ENCODE measurements at regions of chr2 and their contacts with region 1.

Region 1: DNA sequence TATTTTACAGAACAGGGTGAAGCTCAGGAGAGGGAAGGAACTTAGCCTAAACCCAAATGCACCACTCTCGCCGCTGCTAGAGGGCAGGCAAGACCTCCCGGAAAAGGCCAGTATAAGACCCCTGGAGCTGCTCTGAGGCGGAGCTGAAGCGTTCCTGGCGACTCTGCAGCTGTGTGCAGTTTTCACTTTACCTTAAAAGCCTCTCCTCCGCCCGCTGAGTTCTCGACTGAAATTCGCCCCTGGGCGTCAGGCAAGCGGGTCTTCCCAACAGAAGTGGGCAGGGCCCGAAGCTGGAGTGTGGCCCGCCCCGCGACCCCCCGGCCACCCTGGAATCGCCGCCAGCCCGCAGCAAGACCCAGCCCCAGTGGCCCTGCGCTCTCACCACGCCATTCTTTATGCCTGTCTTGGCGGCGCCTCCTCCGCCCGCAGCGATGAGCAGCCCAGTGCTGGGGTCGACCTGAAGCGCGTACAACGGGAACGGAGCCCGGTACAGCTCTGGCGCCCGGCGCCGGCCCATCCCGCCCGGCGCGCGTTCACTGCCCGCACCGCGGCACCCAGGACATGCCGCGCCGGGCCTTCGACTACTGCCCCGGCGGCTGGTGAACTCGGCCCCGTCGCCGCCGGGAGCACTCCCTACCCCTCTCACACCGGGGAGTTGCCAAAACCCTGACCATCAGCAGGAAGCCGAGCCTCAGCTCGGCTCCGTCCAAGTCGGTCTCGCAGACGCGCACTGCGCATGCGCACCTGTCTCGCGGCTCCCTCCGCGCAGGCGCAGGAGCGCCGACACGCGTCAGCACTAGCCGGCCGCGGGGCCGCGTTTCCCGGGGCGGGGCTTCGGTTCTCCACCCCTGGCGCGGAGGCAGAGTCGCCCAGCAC is at the start of gene PREB:
- DNase-seq: peak; percentile 93 to 96
- ATAC-seq: peak; percentile 89 to 96
- H3K4me3 ChIP-seq: peak within 1 kb of the TSS; percentile 89
- H3K27ac ChIP-seq: peak within 1 kb of the TSS; percentile 91 to 95
- H3K4me1 ChIP-seq: peaks cover 11% of the 10 kb centered on the region
- CTCF ChIP-seq: no peak
- EP300 ChIP-seq: no peak
- POLR2A ChIP-seq: peak; percentile 93
- RAD21 ChIP-seq: no peak; a peak in 1 of 5 replicates
- polyA plus RNA-seq, gene PREB: 79.9 and 139 TPM in 2 replicates

Region 2: DNA sequence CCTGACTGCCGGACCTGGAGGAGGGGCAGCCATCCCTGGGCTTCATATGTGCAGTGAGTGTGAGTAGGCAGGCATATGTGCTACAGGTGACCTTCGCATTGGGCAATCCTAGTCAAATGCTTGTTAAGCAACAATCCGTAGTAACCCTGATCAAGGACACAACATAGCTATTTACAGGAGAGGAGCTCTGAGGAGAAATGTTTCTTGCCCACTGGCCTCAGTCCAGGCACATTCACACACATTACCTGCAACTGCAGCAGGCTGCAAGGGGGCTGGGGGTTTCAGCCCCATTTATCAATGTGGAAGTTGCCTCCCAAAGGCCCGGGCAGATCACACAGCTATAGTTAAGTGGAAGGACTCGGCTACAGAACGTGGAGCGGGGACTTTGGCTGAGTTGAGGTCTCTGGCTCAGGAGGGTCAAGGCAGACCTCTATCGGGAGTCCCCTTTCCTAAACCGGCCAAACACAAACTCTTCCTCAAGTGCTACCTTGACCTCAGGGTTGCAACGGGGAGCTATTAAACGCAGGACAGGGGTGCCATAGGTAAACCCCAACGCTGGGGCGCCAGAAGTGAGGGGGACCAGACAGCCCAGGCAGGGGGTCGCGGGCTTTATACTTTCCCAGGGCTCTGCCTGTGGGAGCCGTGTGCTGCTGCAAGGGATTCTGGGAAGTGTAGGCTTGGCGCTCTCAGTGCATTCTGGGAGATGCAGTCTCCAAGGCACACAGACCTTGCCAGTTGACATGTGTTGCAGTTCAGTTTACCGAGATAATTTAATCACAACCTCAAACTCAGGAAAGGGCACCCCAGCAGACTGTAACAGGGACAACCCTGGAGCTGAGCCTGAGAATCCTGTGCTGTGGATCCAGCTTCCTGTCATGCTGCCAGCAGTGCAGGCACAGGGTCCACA is 38.1 kb before region 1 on chr2:
- CTCF ChIA-PET with region 1: interaction called, 14 read pairs
- POLR2A ChIA-PET with region 1: no interaction called
- DNase-seq: peak; percentile 56 to 80
- ATAC-seq: peak; percentile 67 to 85
- H3K4me3 ChIP-seq: no peak overlapping the region
- H3K27ac ChIP-seq: peak overlapping the region; percentile 46 to 71; a peak in 5 of 6 replicates
- H3K4me1 ChIP-seq: peaks cover 20% of the 10 kb centered on the region
- CTCF ChIP-seq: no peak
- EP300 ChIP-seq: no peak
- POLR2A ChIP-seq: no peak
- RAD21 ChIP-seq: no peak

Region 3: DNA sequence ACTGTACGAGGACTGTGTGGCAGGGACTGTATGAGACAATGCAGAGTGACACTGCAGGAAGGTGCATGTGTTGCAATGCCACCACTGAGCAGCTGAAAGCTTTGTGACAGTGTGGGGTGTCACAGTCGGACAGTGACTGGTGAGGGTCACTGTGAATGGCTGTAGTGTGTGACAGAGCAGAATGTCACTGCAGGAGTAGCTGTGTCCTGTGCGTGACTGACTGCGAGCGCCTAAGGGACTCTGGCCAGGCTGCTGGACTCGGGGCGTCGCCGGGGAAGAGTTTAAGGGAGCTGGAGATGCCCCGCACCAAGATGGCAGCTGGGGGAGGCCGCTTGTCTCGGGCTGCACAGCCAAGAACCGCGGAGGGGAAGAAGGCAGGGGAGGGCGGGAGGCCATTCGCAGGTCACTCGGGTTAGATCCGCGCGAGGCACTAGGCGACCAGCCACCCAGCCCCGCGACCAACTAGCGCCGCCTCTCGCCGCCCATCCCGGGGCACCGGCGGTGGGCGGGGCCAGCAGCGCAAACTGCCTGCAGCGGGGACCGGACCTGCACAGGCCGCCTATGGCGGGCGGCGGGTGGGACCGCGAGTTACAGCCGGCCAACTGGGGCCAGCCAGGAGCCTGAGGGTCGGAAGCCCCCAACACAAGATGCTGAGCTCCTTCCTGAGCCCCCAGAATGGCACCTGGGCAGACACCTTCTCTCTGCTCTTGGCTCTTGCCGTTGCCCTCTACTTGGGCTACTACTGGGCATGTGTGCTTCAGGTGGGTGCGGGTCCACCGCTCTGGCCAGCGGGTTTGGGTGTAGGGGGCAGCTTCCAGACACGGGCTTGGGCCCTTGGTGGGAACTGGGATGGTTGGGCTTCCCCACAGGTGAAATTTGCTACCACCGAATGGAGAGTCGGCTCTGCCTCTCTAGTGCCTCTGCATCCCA is 10.6 kb before region 1 on chr2 and contains the start of gene ABHD1:
- CTCF ChIA-PET with region 1: interaction called, 25 read pairs
- POLR2A ChIA-PET with region 1: interaction called, 17 read pairs
- DNase-seq: peak; percentile 36 to 69
- ATAC-seq: peak; percentile 79 to 91
- H3K4me3 ChIP-seq: peak within 1 kb of the TSS; percentile 56
- H3K27ac ChIP-seq: peak within 1 kb of the TSS; percentile 73 to 87
- H3K4me1 ChIP-seq: peaks cover 3% of the 10 kb centered on the region; the same call in 1 of the 3 replicates
- CTCF ChIP-seq: no peak
- EP300 ChIP-seq: no peak
- POLR2A ChIP-seq: peak; percentile 89
- RAD21 ChIP-seq: no peak
- polyA plus RNA-seq, gene ABHD1: 1.9 and 2.4 TPM in 2 replicates

Region 4: DNA sequence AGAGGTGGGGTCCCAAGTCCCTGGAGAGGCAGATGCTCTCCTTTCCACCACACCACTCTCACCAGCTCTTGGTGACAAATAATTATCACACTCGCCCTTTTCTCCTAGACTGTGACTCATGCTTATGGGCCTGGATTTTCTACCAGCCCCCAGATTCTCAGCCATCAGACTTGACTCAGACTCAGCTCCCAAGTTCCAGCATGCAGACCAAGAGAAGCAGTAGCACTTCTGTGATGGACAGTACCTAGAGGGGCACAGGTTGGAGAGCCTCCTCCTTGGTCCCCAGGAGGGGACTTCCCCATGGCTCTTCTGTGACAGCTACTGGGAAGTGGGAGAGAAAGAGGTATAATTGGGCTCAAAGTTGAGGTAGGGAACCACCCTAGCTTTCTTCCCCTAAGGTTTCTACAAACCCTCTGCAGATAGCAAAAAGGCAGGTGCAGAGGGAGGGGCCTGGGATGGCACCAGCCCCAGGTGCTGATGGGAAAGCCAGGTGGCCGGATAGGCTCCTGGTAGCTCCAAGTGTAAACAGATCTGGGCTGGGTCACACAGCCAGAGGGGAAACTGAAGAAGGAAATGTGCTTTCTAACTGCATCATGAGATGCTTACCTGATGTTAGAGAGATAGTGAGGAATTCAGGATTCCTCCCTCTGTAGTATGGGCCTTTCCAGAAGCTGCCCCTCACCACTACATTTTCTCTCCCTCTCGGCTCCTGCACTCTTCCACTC is 18.8 kb after region 1 on chr2:
- CTCF ChIA-PET with region 1: interaction called, 10 read pairs
- POLR2A ChIA-PET with region 1: no interaction called
- DNase-seq: no peak
- ATAC-seq: peak in 1 of 2 experiments; percentile 13; a peak in 2 of 6 replicates
- H3K4me3 ChIP-seq: no peak overlapping the region
- H3K27ac ChIP-seq: no peak overlapping the region
- H3K4me1 ChIP-seq: 0 out of 3 replicates have a peak, but pooled peaks cover 8% of the 10 kb centered on the region
- CTCF ChIP-seq: no peak
- EP300 ChIP-seq: no peak
- POLR2A ChIP-seq: no peak
- RAD21 ChIP-seq: no peak

Region 5: DNA sequence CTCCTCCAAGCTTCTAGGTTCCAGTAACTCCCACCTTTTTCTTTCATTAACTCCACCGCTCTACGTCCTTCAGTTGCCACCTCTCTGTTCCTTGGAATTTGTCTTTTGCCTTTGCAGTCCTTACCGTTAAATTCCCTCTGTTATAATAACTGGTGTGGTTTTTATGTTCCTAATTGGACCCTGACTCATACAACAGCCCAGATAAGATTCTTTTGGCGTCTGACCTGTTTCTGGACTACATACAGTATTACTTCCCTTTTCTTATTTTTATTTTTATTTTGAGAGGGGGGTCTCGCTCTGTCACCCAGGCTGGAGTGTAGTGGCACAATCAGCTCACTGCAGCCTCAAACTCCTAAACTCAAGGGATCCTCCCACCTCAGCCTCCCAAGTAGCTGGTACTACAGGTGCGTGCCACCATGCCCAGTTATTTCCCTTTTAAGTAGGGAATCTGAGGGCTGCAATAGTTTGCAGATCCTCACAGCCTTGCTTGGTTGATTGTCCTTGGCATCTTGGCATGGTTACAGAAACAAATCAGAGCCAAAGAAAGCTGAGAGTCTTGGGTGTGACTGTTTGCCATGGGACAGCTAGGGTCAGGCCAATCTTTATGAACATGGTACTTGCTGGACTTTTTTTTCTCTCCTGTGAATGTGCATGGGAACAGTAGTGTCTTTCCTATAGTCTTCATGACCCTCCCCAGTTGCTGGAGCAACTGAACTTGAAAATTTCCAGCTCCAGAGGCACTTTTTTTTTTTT is 36.6 kb after region 1 on chr2:
- CTCF ChIA-PET with region 1: interaction called, 10 read pairs
- POLR2A ChIA-PET with region 1: no interaction called
- DNase-seq: no peak
- ATAC-seq: no peak
- H3K4me3 ChIP-seq: no peak overlapping the region
- H3K27ac ChIP-seq: no peak overlapping the region
- H3K4me1 ChIP-seq: no peaks in the 10 kb centered on the region
- CTCF ChIP-seq: no peak
- EP300 ChIP-seq: no peak
- POLR2A ChIP-seq: no peak
- RAD21 ChIP-seq: no peak

Measured in A549 (cell line).